Activated naive CD4-positive, alpha-beta T cell treated with anti-CD3 and anti-CD28 coated beads, Interleukin-2, amount 10 ng/mL, durations not matched to agents 7 days and 5 days (primary cell): ENCODE measurements at regions of chr9 and their contacts with region 1.

Region 1: DNA sequence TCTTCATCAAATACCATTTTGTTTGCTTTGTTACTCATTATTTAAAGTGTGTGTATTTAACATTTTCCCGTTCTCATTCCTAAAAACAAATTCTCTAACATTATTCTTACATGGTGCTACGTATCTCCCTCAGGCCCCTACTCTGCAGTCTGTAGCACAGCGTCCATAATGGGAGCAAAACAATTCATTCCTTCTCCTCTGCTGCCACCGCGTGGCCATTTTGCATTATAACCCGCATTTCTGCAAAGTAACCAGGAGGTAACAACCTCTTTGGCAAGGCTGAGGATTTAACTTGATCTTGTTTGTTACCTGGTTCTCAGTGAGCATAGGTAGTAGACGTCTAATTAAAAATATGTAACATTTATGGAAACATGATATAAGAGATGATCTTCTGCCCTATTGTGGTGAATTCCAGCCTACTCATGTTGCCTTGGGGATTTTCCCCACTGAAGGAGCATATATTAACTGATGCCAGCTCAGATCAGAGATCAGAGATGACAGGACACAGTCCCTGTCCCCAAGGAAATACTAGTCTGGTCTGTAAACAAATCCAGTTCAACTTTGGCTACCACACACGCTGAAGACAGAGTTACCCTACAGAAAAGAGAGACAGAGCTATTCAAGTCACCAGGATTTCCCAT is 10.5 kb downstream of the OR1K1 start:
- DNase-seq: peak; percentile 85
- H3K4me3 Mint-ChIP-seq: no peak overlapping the region
- H3K27ac Mint-ChIP-seq: no peak overlapping the region
- H3K4me1 Mint-ChIP-seq: peaks cover 28% of the 10 kb centered on the region
- H3K27me3 Mint-ChIP-seq: no peaks in the 10 kb centered on the region

Region 2: DNA sequence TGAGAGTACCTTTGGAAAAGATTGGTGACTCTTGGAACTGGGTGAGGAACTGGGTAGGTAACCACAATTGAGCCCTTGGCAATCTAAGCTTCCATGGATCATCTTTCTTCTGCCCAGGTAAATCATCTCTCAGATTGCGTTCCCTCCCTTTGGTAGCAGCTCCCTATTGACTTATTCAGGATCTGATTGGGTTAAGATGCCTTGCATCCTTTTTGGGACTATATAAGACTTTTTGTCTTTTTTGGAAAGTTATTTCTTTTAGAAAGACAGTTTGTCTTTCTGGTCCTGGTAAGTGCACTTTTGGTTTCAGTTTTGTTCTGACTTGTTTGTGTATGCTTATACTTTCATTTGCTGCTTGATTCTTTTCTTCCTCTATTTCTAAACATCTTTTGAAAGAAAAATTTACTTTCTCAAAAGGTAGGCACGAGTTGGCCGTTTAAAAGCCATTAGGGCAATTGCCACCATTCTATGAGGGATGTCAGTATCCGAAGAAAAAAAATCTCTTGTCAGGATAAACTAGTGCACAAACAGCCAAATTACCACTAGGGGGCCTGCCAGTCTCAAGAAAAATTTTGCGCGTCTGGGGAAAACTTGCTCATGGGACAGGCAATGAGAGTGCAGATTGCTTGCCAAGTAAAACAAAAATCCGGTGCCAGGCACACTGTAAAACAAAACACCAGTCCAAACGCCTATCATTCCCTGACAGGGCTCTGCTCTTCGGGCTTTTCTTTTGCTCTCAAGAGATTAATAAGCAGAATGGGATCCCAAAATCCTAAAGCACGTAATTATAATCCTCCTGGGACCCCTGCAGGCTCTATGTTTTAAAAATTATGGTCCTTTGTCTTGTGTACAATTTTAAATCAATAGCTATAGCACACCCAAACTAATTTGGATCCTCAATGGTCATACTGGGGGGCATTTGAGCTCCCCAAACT is 345.5 kb before region 1 on chr9:
- CTCF ChIA-PET with region 1: interaction called, 51 read pairs
- DNase-seq: peak; percentile 75
- H3K4me3 Mint-ChIP-seq: peak overlapping the region; percentile 78
- H3K27ac Mint-ChIP-seq: peak overlapping the region; percentile 90
- H3K4me1 Mint-ChIP-seq: peaks cover 19% of the 10 kb centered on the region
- H3K27me3 Mint-ChIP-seq: peaks cover 51% of the 10 kb centered on the region

Region 3: GRCh38 chr9:122498883-122499288 is 311.5 kb before region 1 on chr9:
- CTCF ChIA-PET with region 1: interaction called, 14 read pairs
- DNase-seq: peak; percentile 36
- H3K4me3 Mint-ChIP-seq: no peak overlapping the region
- H3K27ac Mint-ChIP-seq: no peak overlapping the region
- H3K4me1 Mint-ChIP-seq: no peaks in the 10 kb centered on the region
- H3K27me3 Mint-ChIP-seq: peaks cover 29% of the 10 kb centered on the region